AG04449 (cell line): ENCODE measurements at regions of chr16 and their contacts with region 1.

Region 1: DNA sequence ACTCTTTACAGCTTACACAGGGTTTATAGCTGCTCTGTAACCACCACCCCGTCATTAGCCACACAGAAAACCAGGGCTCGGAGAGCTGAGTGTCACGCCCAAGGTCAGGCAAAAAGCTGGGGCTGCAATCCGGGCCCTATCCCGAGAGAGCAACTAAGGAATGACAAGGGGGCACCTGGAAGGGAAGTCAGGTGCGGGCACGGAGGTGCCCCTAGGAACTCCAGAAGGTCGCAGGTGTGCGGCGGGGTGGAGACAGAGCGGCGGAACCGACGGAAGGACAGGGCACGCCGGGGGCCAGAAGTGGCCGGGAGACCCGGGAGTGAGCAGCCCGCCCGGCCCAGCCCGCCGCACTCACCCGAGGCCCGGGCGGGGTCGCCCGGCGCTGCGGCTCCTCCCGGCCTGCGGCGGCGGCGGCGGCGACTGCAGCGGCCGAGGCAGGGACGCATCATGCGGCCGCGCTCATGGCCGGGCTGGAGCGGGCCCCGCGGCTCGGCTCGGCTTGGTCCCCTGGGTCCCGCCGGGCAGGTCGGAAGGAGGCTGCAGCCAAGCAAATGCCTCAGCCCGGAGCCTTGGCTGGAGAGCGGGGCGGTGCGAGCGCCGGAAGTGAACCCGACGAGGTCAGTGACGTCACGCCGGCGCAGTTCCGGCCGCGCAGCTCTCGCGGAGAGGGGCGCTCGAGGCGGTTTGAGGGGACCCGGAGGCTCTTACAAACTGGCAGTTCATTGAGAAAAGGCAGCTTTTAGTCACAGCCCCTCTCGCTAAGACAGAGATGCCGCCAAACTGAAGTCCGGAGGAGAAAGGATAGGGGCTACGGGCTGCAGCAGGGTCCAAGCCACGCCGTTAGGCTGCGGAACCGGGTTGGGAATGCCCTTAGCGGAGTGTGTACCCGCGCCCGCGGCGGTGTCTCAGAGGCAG is at the start of gene ZDHHC7:
- DNase-seq: no peak
- H3K4me3 ChIP-seq: peak within 1 kb of the TSS; percentile 91
- CTCF ChIP-seq: no peak

Region 2: GRCh38 chr16:84995663-84996062 is 15.5 kb before region 1 on chr16:
- CTCF ChIA-PET with region 1: interaction called, 4 read pairs
- POLR2A ChIA-PET with region 1: interaction called, 14 read pairs
- DNase-seq: no peak
- H3K4me3 ChIP-seq: no peak overlapping the region
- CTCF ChIP-seq: no peak

Region 3: DNA sequence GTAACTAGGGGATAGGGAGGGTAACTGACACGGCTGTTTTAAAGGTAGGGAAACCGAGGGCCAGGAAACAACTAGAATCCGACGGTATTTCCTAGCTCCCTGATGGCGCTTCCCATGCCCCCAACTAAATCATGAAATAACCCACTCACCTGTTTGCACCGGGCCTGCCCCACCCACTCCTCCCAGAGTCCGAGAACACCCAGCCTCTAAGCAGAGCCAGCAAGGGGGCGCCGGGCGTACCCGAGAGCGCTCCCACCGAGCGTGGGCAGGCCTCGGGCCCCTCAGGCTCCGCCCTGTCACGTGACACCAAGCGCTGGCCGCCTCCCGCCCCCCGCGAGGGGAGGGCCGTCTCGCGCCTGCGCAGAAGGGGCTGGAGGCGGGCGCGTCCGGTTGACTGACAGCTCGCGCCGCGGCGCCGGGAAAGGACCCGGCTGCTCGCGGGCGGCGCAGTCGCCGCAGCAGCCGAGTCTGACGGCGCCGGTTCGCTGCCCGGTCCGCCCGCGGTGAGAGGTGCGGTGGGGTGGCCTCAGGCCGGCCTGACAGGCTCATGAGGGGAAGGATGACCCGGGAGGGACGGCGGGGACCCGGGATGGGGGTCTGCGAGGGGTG is 16.3 kb after region 1 on chr16 and contains the start of gene KIAA0513:
- CTCF ChIA-PET with region 1: interaction called, 6 read pairs
- POLR2A ChIA-PET with region 1: interaction called, 15 read pairs
- DNase-seq: no peak
- H3K4me3 ChIP-seq: peak within 1 kb of the TSS; percentile 81
- CTCF ChIP-seq: peak; percentile 34